ENCODE measurements at regions of chr4 and their contacts with region 1.

Region 1: GRCh38 chr4:141524116-141524515 is 112.3 kb upstream of the IL15 start:
- DNase-seq: no peak

Region 2: GRCh38 chr4:141746026-141746425 is 221.9 kb after region 1 on chr4:
- intact Hi-C with region 1: loop called (anchors 5 kb)
- DNase-seq: no peak